ENCODE measurements at regions of chr17 and their contacts with region 1.

Region 1: DNA sequence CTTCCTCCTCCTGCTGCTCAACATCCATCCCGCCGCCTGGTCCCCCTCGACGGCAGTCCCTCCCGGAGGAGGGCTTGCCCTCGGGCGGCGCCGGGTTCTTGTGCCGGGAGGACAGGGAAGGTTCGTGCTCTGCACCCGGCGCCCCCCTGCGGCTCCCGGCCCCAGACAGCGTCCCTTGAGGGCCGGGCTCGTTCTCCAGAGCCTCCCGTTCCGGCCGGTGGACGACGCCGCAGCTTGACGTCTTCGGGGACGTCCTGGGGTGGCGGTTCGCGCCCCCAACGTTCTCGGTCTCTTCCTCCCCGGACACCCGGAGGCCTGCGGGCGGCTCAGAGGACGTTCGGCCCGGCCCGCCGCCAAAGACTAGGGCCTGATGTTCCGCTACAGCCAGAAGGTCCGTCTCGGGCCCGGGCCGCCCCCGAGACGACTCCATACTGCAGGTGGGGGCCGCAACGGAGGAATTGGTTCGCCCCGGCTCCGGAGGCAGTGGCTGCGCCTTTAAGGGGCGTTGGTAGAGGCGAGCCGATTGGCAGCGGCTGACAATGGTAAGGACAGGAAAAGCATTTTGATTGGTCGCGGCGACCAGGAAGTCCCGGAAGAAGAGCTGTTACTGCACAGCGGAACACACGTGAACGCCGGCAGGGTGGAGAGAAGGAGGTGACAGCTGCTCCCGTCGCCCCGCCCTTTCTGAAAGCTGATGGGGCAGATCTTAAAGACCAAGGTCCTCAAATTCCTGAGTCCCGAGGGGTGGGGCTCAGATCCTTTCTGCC is at the start of gene BORCS6:
- DNase-seq: peak; percentile 90
- ATAC-seq: peak; percentile 66
- H3K4me3 Mint-ChIP-seq: no peak within 1 kb of the TSS
- H3K27ac Mint-ChIP-seq: peak within 1 kb of the TSS; percentile 95
- H3K4me1 Mint-ChIP-seq: peaks cover 10% of the 10 kb centered on the region
- H3K27me3 Mint-ChIP-seq: no peaks in the 10 kb centered on the region
- total RNA-seq, gene BORCS6: 15.7 to 16.5 TPM

Region 2: GRCh38 chr17:8118769-8119580 is 70.9 kb before region 1 on chr17:
- POLR2A ChIA-PET with region 1: interaction called, 20 read pairs
- DNase-seq: peak; percentile 90
- ATAC-seq: peak; percentile 68
- H3K4me3 Mint-ChIP-seq: peak overlapping the region; percentile 91
- H3K27ac Mint-ChIP-seq: peak overlapping the region; percentile 92
- H3K4me1 Mint-ChIP-seq: peaks cover 46% of the 10 kb centered on the region
- H3K27me3 Mint-ChIP-seq: peaks cover 61% of the 10 kb centered on the region

Region 3: GRCh38 chr17:8131844-8132441 is 58.0 kb before region 1 on chr17:
- POLR2A ChIA-PET with region 1: no interaction called
- DNase-seq: no peak
- ATAC-seq: no peak
- H3K4me3 Mint-ChIP-seq: no peak overlapping the region
- H3K27ac Mint-ChIP-seq: no peak overlapping the region
- H3K4me1 Mint-ChIP-seq: peaks cover 8% of the 10 kb centered on the region
- H3K27me3 Mint-ChIP-seq: peaks cover 18% of the 10 kb centered on the region

Region 4: GRCh38 chr17:8156246-8156992 is 33.5 kb before region 1 on chr17:
- POLR2A ChIA-PET with region 1: interaction called, 13 read pairs
- DNase-seq: peak; percentile 99
- ATAC-seq: peak; percentile 77
- H3K4me3 Mint-ChIP-seq: no peak overlapping the region
- H3K27ac Mint-ChIP-seq: no peak overlapping the region
- H3K4me1 Mint-ChIP-seq: peaks cover 54% of the 10 kb centered on the region
- H3K27me3 Mint-ChIP-seq: no peaks in the 10 kb centered on the region

Region 5: DNA sequence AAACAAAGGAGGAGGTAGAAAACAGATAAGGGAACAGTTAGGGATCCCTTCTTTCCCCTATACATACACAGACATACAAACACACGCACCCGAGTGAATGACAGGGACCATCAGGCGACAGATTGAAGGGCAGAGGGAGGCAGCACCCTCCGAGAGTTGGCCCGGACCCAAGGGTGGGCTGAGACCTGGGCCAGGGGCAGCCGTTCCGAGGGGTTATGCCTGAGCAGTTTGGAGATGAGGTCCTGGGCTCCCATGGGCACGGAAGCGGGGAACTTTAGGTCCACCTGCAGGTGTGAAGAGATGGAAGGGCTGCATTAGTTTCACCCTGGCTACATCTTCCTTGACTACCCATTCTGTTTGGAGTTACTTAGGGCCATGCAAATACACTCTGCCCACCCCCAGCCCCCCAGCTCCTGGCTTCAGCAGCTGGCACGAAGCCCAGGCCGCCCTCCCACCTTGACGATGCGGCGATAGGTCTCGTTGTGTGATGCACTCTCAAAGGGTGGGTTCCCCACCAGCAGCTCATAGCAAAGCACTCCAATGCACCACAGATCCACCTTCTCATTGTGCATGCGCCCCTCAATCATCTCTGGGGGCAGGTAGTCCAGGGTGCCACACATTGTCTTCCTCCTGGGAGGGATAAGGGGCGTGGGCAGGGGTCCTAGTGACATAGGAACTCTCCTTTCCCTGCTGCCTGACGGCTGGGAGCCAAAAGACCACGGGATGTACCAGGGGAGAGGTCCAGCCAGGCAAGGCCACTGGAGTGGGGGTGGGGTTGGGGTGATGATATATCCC is 15.1 kb after region 1 on chr17:
- POLR2A ChIA-PET with region 1: interaction called, 57 read pairs
- DNase-seq: no peak
- ATAC-seq: no peak
- H3K4me3 Mint-ChIP-seq: no peak overlapping the region
- H3K27ac Mint-ChIP-seq: no peak overlapping the region
- H3K4me1 Mint-ChIP-seq: peaks cover 29% of the 10 kb centered on the region
- H3K27me3 Mint-ChIP-seq: no peaks in the 10 kb centered on the region

Region 6: GRCh38 chr17:8222630-8223356 is 32.9 kb after region 1 on chr17:
- POLR2A ChIA-PET with region 1: interaction called, 130 read pairs
- DNase-seq: peak; percentile 90
- ATAC-seq: peak; percentile 40
- H3K4me3 Mint-ChIP-seq: peak overlapping the region; percentile 93
- H3K27ac Mint-ChIP-seq: peak overlapping the region; percentile 95
- H3K4me1 Mint-ChIP-seq: peaks cover 52% of the 10 kb centered on the region
- H3K27me3 Mint-ChIP-seq: peaks cover 2% of the 10 kb centered on the region

Region 7: DNA sequence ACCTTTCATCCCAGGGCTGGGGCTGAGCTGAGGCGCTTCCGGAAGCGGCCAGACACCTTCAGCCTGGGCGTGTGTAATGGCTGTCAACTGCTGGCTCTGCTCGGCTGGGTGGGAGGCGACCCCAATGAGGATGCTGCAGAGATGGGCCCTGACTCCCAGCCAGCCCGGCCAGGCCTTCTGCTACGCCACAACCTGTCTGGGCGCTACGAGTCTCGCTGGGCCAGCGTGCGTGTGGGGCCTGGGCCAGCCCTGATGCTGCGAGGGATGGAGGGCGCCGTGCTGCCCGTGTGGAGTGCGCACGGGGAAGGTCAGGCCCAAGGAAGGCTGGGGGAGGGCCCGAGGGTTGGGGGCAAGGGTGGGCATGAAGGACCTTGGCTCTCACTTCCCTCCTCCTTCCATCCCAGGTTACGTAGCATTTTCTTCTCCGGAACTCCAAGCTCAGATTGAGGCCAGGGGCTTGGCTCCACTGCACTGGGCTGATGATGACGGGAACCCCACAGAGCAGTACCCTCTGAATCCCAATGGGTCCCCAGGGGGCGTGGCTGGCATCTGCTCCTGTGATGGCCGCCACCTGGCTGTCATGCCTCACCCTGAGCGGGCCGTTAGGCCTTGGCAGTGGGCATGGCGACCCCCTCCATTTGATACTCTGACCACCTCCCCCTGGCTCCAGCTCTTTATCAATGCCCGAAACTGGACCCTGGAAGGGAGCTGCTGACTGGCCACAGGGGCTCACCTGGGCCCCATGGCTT is 78.8 kb after region 1 on chr17:
- POLR2A ChIA-PET with region 1: no interaction called
- DNase-seq: no peak
- ATAC-seq: no peak
- H3K4me3 Mint-ChIP-seq: no peak overlapping the region
- H3K27ac Mint-ChIP-seq: no peak overlapping the region
- H3K4me1 Mint-ChIP-seq: no peaks in the 10 kb centered on the region
- H3K27me3 Mint-ChIP-seq: no peaks in the 10 kb centered on the region

Measured in activated naive CD8-positive, alpha-beta T cell treated with anti-CD3 and anti-CD28 coated beads, Interleukin-2, amount 10 ng/mL, durations not matched to agents 7 days and 5 days (primary cell).